ENCODE measurements at regions of chr5 and their contacts with region 1.

Region 1: GRCh38 chr5:170100066-170100943 is 5.4 kb upstream of the FOXI1 start:
- DNase-seq: peak; percentile 39
- ATAC-seq: peak; percentile 49
- H3K4me3 Mint-ChIP-seq: no peak overlapping the region
- H3K27ac Mint-ChIP-seq: no peak overlapping the region
- H3K4me1 Mint-ChIP-seq: no peaks in the 10 kb centered on the region
- H3K27me3 Mint-ChIP-seq: peaks cover 7% of the 10 kb centered on the region
- CTCF ChIP-seq: peak; percentile 45

Region 2: GRCh38 chr5:170120576-170120975 is 20.3 kb after region 1 on chr5:
- CTCF ChIA-PET with region 1: no interaction called
- POLR2A ChIA-PET with region 1: no interaction called
- intact Hi-C with region 1: no loop called
- DNase-seq: no peak
- ATAC-seq: no peak
- H3K4me3 Mint-ChIP-seq: no peak overlapping the region
- H3K27ac Mint-ChIP-seq: no peak overlapping the region
- H3K4me1 Mint-ChIP-seq: no peaks in the 10 kb centered on the region
- H3K27me3 Mint-ChIP-seq: peaks cover 2% of the 10 kb centered on the region
- CTCF ChIP-seq: no peak

Region 3: DNA sequence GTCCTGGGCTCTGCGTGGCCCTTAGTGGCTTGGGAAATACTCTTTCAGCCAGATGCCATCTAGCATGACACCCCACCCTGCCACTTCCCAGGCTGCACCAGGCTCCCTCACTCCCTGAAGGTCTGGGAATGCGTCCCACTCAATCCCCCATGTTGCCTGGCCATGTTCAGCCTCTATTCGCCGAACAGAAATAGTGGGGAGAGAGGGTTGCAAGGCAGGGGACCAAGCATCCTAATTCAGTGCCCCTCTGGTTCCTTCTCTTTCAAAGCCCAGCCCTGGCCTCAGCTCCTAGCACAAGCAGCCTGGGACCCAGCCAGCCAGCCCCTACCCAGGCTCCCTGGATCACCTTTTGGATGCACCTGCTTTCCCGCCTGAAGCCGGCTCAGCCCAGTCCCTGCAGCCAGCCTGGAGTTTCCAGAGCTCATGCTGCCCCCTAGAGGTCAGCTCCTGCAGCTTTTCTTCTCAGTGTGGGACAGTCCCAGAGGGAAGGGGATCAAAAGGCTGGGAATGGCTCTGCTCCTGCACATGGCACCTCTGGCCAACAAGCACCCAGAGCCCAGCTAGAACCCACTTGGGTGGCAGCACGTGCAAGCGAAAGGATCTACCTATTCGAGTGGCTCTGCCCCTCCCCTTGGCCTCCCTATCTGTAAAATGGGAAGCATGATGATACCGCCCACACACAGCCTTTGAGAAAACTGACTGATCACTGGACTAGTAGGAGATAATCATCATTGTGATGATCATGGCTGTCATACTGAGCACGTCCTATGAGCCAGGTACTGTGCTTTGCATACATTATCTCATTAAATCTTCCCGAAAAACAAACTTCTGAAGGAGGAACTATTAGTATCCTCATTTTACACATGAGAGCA is 83.7 kb after region 1 on chr5:
- CTCF ChIA-PET with region 1: no interaction called
- POLR2A ChIA-PET with region 1: no interaction called
- intact Hi-C with region 1: loop called (anchors 1 kb)
- DNase-seq: no peak
- ATAC-seq: no peak
- H3K4me3 Mint-ChIP-seq: no peak overlapping the region
- H3K27ac Mint-ChIP-seq: no peak overlapping the region
- H3K4me1 Mint-ChIP-seq: no peaks in the 10 kb centered on the region
- H3K27me3 Mint-ChIP-seq: peaks cover 2% of the 10 kb centered on the region
- CTCF ChIP-seq: no peak

Region 4: DNA sequence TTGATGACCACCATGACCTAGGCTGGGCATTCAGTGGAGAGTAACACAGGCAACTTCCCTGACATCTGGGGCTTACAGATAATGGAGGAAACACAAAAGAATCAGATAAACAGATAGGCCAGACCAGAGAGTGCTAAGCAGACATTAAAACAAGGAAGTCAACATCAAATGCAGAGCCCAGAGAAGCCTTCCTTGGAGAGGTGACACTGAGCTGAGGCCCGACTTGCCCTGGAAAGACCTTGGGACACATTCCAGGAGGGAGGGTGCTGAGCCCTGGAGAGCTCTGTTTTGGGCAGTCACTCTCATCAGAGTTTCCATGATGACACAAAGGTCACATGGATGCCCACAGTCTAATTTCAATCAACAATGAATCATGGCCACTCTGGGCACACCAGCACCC is 100.6 kb after region 1 on chr5:
- CTCF ChIA-PET with region 1: no interaction called
- POLR2A ChIA-PET with region 1: no interaction called
- intact Hi-C with region 1: no loop called
- DNase-seq: no peak
- ATAC-seq: no peak
- H3K4me3 Mint-ChIP-seq: no peak overlapping the region
- H3K27ac Mint-ChIP-seq: no peak overlapping the region
- H3K4me1 Mint-ChIP-seq: no peaks in the 10 kb centered on the region
- H3K27me3 Mint-ChIP-seq: peaks cover 15% of the 10 kb centered on the region
- CTCF ChIP-seq: no peak

Region 5: GRCh38 chr5:170338933-170339779 is 238.9 kb after region 1 on chr5:
- CTCF ChIA-PET with region 1: no interaction called
- POLR2A ChIA-PET with region 1: no interaction called
- intact Hi-C with region 1: loop called (anchors 2 kb)
- DNase-seq: peak; percentile 35
- ATAC-seq: peak; percentile 90
- H3K4me3 Mint-ChIP-seq: no peak overlapping the region
- H3K27ac Mint-ChIP-seq: no peak overlapping the region
- H3K4me1 Mint-ChIP-seq: peaks cover 20% of the 10 kb centered on the region
- H3K27me3 Mint-ChIP-seq: no peaks in the 10 kb centered on the region
- CTCF ChIP-seq: peak; percentile 48

Region 6: DNA sequence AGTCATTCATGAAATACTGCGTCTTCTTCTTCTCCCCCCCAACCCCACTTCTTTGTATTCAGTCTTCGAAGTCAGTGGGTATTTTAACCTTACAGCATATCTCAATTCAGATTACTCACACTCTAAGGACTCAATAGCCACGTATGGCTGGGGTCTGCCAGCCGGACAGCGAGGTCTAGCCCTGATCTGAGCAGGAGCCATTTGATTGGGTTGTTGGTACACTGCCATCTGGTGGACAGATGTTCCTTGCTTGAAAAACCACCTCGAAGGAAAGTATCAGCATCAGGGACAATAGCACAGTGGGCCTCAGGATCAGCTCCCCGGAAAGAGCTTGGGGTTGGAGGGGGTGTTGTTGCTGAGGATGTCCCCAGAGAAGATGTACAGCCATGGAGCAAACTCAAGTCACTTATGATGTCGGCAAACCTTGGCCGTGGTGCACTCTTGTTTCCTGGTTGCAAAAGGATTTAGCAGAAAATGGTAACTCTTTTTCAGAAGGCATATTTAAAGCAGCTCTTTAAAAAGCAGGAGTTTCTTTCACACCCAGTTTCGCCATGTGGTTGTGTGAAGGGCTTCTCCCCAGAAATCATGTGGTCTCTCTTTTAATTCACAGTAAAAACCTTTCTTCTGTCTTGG is 320.6 kb after region 1 on chr5:
- CTCF ChIA-PET with region 1: interaction called, 5 read pairs
- POLR2A ChIA-PET with region 1: no interaction called
- intact Hi-C with region 1: loop called (anchors 1 kb)
- DNase-seq: no peak
- ATAC-seq: peak; percentile 58
- H3K4me3 Mint-ChIP-seq: no peak overlapping the region
- H3K27ac Mint-ChIP-seq: no peak overlapping the region
- H3K4me1 Mint-ChIP-seq: peaks cover 4% of the 10 kb centered on the region
- H3K27me3 Mint-ChIP-seq: peaks cover 23% of the 10 kb centered on the region
- CTCF ChIP-seq: peak; percentile 35

Region 7: GRCh38 chr5:170633235-170634081 is 533.2 kb after region 1 on chr5:
- CTCF ChIA-PET with region 1: interaction called, 6 read pairs
- POLR2A ChIA-PET with region 1: no interaction called
- intact Hi-C with region 1: loop called (anchors 1 kb)
- DNase-seq: no peak
- ATAC-seq: peak; percentile 28
- H3K4me3 Mint-ChIP-seq: peak overlapping the region; percentile 75
- H3K27ac Mint-ChIP-seq: no peak overlapping the region
- H3K4me1 Mint-ChIP-seq: peaks cover 15% of the 10 kb centered on the region
- H3K27me3 Mint-ChIP-seq: peaks cover 18% of the 10 kb centered on the region
- CTCF ChIP-seq: no peak

Region 8: GRCh38 chr5:170791325-170791954 is 691.1 kb after region 1 on chr5:
- CTCF ChIA-PET with region 1: no interaction called
- POLR2A ChIA-PET with region 1: no interaction called
- intact Hi-C with region 1: loop called (anchors 5 kb)
- DNase-seq: no peak
- ATAC-seq: no peak
- H3K4me3 Mint-ChIP-seq: no peak overlapping the region
- H3K27ac Mint-ChIP-seq: no peak overlapping the region
- H3K4me1 Mint-ChIP-seq: no peaks in the 10 kb centered on the region
- H3K27me3 Mint-ChIP-seq: peaks cover 2% of the 10 kb centered on the region
- CTCF ChIP-seq: no peak

Measured in activated B cell treated with CpG ODN at 0.5 μM for 24 hours (primary cell).